Activated T-helper 1 cell treated with anti-CD3 and anti-CD28 coated beads, Interleukin-12 subunit alpha, Interleukin-12 subunit beta, Interleukin-2, Interleukin-4 antibody, amounts not matched to agents 30 ng/mL and 10 ng/mL and 1 ng/mL, durations not matched to agents 14 hours and 24 hours and 36 hours (primary cell): ENCODE measurements at regions of chr10 and their contacts with region 1.

Region 1: GRCh38 chr10:133309111-133309719 is 501 bp downstream of the ZNF511 start:
- DNase-seq: peak; percentile 85
- H3K4me3 Mint-ChIP-seq: peak overlapping the region; percentile 62
- H3K27ac Mint-ChIP-seq: peak overlapping the region; percentile 82
- H3K4me1 Mint-ChIP-seq: peaks cover 17% of the 10 kb centered on the region
- H3K27me3 Mint-ChIP-seq: no peaks in the 10 kb centered on the region

Region 2: DNA sequence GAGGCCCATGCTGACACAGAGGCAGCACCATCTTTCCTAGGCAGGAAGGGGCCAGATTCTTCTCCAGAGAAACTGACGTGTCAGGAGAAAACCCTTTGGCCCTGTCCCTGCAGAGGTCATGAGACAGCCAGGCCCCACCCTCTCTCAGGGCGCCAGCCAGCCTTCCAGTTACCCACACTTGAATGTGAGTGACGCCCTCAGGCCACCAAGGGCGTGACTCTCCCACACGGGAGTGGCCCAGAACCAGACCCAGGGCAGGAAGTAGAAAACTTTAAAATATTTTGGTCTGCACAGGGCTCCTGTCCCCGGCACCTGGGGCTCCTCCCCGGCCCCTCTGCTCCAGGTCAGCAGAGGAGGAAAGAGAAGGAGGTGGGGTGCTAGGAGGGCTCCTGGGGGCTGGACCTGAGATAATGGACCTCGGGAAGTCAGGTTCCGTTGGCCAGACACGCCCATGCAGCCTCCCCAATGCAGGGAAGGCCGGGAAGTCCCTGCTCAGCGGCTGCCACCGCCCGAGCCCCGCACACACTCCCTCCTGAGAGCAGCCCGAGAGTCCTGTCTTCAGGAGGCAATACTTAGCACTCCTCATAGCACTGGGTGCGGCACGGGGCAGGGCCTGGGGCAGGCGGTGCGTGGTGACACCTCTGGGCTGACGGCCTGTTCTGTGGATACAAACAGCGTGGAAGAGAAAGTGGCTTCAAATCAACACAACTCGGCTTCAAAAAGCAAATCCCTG is 299.8 kb before region 1 on chr10:
- intact Hi-C with region 1: no loop called
- DNase-seq: no peak
- H3K4me3 Mint-ChIP-seq: no peak overlapping the region
- H3K27ac Mint-ChIP-seq: no peak overlapping the region
- H3K4me1 Mint-ChIP-seq: no peaks in the 10 kb centered on the region
- H3K27me3 Mint-ChIP-seq: no peaks in the 10 kb centered on the region

Region 3: GRCh38 chr10:133261726-133262325 is 47.4 kb before region 1 on chr10:
- intact Hi-C with region 1: loop called (anchors 1 kb)
- DNase-seq: peak; percentile 76
- H3K4me3 Mint-ChIP-seq: peak overlapping the region; percentile 65
- H3K27ac Mint-ChIP-seq: peak overlapping the region; percentile 48
- H3K4me1 Mint-ChIP-seq: peaks cover 56% of the 10 kb centered on the region
- H3K27me3 Mint-ChIP-seq: peaks cover 5% of the 10 kb centered on the region

Region 4: DNA sequence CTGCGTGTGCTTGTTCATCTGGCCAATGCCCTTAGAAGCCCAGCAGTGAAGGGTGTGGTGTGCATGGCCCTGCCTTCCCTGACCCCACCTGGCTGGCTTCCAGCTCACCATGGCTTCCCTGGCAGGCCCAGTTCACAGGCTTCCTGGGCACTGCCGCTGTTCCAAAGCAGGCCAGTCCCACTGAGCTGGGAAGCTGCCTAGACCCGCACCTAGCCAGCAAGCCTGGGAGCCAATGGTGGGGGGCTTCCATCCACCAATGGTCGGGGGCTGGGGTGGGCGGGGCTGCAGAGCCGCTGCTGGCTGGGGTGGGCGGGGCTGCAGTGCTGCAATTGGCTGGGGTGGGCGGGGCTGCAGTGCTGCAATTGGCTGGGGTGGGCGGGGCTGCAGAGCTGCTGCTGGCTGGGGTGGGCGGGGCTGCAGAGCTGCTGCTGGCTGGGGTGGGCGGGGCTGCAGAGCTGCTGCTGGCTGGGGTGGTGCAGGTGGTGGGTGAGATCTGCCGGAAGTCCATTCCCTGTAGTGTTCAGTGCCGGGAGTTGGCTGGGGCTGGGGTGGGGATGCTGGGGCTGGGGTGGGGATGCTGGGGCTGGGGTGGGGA is 15.1 kb after region 1 on chr10:
- intact Hi-C with region 1: loop called (anchors 1 kb)
- DNase-seq: peak; percentile 40
- H3K4me3 Mint-ChIP-seq: no peak overlapping the region
- H3K27ac Mint-ChIP-seq: no peak overlapping the region
- H3K4me1 Mint-ChIP-seq: peaks cover 3% of the 10 kb centered on the region
- H3K27me3 Mint-ChIP-seq: peaks cover 34% of the 10 kb centered on the region

Region 5: DNA sequence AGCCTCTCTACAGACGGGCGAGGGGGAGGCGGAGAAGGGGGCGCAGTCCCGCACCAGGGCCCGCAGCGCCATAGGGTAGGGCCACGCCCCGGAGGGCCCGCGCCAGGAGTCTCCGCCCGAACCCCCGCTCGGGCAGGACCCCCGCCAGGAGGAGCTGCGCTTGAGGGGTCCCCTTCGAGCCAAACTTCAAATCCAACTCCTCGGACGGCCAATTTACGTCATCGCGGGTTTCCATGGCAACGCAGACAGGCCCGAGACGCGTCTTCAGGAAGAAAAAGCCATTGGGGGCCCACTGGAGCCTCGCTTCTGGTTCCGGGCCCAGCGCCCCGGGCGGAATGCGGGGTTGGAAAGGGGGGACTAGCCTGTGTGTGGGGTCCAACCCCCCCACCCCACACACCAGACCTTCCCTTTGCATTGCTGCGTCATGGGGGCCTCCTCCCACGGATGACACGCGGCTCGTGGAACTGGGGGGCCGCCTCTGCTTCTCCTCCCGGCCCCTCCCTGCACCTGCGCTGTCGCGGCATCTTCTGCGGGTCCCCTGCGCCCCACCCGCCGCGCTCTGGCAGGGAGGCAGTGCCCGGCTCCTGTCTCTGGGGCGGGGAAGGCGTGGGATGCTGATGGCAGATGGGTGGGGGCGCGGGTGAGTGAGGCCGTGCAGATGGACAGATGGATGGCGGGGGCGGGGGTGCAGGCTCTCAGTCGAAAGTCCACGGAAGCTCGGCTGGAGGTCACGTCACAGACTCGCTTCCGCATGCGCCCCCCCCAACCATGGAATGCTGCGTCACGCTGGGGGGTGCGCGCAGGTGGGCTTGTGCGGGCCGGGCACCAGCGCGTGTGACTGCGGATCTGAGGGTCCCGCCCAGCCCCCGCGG is 26.3 kb after region 1 on chr10:
- intact Hi-C with region 1: loop called (anchors 1 kb)
- DNase-seq: peak; percentile 58
- H3K4me3 Mint-ChIP-seq: peak overlapping the region; percentile 16
- H3K27ac Mint-ChIP-seq: no peak overlapping the region
- H3K4me1 Mint-ChIP-seq: peaks cover 6% of the 10 kb centered on the region
- H3K27me3 Mint-ChIP-seq: peaks cover 37% of the 10 kb centered on the region

Region 6: GRCh38 chr10:133373104-133373624 is 63.9 kb after region 1 on chr10 and contains the start of gene ECHS1:
- intact Hi-C with region 1: loop called (anchors 1 kb)
- DNase-seq: peak; percentile 95
- H3K4me3 Mint-ChIP-seq: peak within 1 kb of the TSS; percentile 91
- H3K27ac Mint-ChIP-seq: peak within 1 kb of the TSS; percentile 84
- H3K4me1 Mint-ChIP-seq: peaks cover 5% of the 10 kb centered on the region
- H3K27me3 Mint-ChIP-seq: peaks cover 16% of the 10 kb centered on the region
- total RNA-seq, gene ECHS1: 69.3 and 69.6 TPM in 2 replicates

Region 7: DNA sequence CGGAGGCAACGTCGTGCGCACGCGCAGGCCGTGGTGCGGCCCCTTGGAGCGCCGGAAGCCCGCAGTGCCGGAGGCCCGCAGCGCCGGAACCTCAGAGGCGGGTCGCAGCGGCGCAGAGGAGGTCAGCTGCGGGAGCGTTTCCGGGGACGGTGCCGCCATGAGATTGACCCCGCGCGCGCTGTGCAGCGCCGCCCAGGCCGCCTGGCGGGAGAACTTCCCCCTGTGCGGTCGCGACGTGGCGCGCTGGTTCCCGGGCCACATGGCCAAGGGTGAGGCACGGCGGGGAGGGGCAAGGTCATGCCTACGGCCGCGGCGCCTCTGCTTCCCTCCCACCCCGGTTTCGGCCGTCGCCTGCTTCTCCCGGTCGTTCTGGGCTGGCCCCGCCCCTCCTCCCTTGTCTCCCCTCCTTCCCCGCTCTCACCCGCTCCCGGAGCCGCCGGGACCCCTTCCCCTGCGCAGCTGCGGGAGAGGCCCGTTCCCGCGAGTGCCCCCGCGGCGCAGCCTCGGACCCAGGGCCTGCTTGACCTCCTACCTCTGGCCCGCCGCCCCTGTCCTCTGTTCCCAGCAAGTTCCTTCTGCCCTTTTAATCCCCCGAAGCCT is 84.9 kb after region 1 on chr10 and contains the start of gene MTG1:
- intact Hi-C with region 1: loop called (anchors 1 kb)
- DNase-seq: peak; percentile 96
- H3K4me3 Mint-ChIP-seq: peak within 1 kb of the TSS; percentile 99
- H3K27ac Mint-ChIP-seq: peak within 1 kb of the TSS; percentile 98
- H3K4me1 Mint-ChIP-seq: peaks cover 28% of the 10 kb centered on the region
- H3K27me3 Mint-ChIP-seq: no peaks in the 10 kb centered on the region
- total RNA-seq, gene MTG1: 64.9 and 67.9 TPM in 2 replicates

Region 8: GRCh38 chr10:133465191-133465949 is 156.2 kb after region 1 on chr10:
- intact Hi-C with region 1: no loop called
- DNase-seq: no peak
- H3K4me3 Mint-ChIP-seq: no peak overlapping the region
- H3K27ac Mint-ChIP-seq: no peak overlapping the region
- H3K4me1 Mint-ChIP-seq: no peaks in the 10 kb centered on the region
- H3K27me3 Mint-ChIP-seq: no peaks in the 10 kb centered on the region